Esophagus squamous epithelium (tissue), 5 donors: ENCODE measurements at regions of chr10 and their contacts with region 1.

Region 1: GRCh38 chr10:119139464-119140067 is 25.9 kb downstream of the SFXN4 start:
- DNase-seq: no peak
- H3K4me3 ChIP-seq: no peak overlapping the region
- H3K27ac ChIP-seq: no peak overlapping the region
- H3K4me1 ChIP-seq: peaks cover 0 to 4% (median 3%) of the 10 kb centered on the region in 3 donors
- H3K27me3 ChIP-seq: no peaks in the 10 kb centered on the region
- CTCF ChIP-seq: peak in 5 of 6 experiments; percentile 12 to 68 (median 33)
- POLR2A ChIP-seq: no peak

Region 2: GRCh38 chr10:119421887-119422681 is 282.5 kb after region 1 on chr10:
- intact Hi-C with region 1: loop called (anchors 10 kb)
- DNase-seq: no peak
- H3K4me3 ChIP-seq: no peak overlapping the region
- H3K27ac ChIP-seq: peak overlapping the region in 3 of 4 donors; percentile 35 to 61 (median 44)
- H3K4me1 ChIP-seq: peaks cover 0 to 32% (median 7%) of the 10 kb centered on the region in 3 donors
- H3K27me3 ChIP-seq: no peaks in the 10 kb centered on the region
- CTCF ChIP-seq: no peak
- POLR2A ChIP-seq: no peak

Region 3: DNA sequence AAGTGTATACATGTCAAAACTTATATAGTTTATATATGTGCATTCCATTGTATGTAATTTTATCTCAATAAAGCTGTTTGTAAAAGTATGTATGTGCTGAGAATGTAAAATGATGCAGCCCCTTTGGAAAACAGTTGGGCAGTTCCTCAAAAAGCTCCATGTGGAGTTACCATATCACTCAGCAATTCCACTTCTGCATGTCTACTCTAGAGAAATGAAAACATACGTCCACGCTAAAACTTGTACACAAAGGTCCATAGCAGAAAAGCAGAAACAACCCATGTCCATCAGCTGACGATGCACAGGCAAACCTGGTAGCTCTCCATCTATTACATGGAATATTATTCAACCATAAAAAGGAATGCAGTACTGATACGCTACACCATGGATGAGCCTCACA is 411.3 kb after region 1 on chr10:
- intact Hi-C with region 1: no loop called
- DNase-seq: no peak
- H3K4me3 ChIP-seq: no peak overlapping the region
- H3K27ac ChIP-seq: no peak overlapping the region
- H3K4me1 ChIP-seq: peaks cover 0 to 11% (median 0%) of the 10 kb centered on the region in 3 donors
- H3K27me3 ChIP-seq: peaks cover 0 to 7% (median 0%) of the 10 kb centered on the region in 4 donors
- CTCF ChIP-seq: no peak
- POLR2A ChIP-seq: no peak